ENCODE measurements at regions of chr1 and their contacts with region 1.

Region 1: DNA sequence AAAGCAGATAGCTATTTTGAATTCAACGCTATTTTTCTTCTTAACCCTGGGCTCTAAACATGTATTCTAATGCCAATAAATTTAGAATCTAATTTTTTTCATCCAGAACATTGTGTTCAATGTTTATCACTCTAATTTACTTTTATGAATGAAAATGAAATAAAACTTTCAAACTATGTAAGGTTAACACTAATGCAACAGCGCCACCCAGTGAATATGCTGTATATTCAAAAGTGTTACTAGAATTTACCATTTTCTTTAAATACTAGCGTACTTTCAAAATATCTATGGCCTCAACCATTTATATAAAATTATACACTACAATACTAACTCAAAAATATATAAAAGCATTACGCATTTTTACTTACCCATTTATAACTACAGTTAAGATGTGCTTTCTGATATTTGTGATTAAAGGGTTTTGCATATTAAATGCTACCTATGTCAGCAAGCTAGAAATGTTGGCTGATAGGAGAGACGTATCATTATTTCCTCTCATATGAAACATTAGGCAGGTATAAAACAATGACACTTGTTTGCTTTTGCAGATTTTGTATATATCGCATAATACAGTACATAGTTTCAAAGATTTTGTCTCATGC is 5.9 kb upstream of the NUF2 start:
- DNase-seq: no peak
- ATAC-seq: peak; percentile 48; the same call in 2 of the 3 replicates
- H3K4me3 ChIP-seq: no peak overlapping the region
- H3K27ac ChIP-seq: no peak overlapping the region
- H3K4me1 ChIP-seq: no peaks in the 10 kb centered on the region
- H3K27me3 ChIP-seq: no peaks in the 10 kb centered on the region
- CTCF ChIP-seq: peak in 2 of 3 experiments; percentile 45 to 55; a peak in 5 of 6 replicates
- EP300 ChIP-seq: no peak
- POLR2A ChIP-seq: no peak
- RAD21 ChIP-seq: peak; percentile 68

Region 2: DNA sequence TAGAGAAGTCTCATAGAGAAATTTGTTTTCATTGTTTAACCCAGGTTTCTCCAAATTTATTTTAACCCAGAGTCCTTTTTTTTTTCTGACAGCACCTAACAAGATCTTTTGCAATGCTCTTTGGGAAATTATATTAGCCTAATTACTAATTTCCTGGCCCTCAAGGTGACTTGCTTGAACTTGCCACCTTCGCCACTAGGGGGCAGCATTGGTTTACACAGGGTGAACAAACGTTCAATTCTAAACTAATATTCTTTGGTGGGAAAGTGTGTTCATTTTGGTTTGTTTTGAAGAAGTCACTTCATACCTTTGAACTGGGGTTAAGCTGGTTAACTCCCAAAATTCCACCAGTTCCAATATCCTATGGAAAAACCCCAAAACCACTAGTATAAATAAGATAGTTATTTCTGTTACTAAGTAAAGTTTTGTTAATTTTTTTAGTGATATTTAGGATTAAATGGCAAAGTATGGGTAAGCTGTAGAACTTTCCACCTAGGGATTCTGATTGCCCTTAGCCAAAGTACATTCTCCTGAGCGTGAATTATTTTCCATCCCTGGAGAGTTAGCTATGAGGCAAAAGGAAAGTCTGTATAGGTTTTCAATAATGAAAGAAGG is 467.9 kb before region 1 on chr1:
- CTCF ChIA-PET with region 1: interaction called, 76 read pairs
- POLR2A ChIA-PET with region 1: no interaction called
- RAD21 ChIA-PET with region 1: interaction called, 31 read pairs
- SMC1A ChIA-PET with region 1: interaction called, 33 read pairs
- in situ Hi-C with region 1: no loop called
- intact Hi-C with region 1: no loop called
- DNase-seq: no peak
- ATAC-seq: peak; percentile 79
- H3K4me3 ChIP-seq: no peak overlapping the region
- H3K27ac ChIP-seq: no peak overlapping the region
- H3K4me1 ChIP-seq: no peaks in the 10 kb centered on the region
- H3K27me3 ChIP-seq: no peaks in the 10 kb centered on the region; a peak in 1 of 4 replicates
- CTCF ChIP-seq: peak; percentile 81 to 83 (median 82)
- EP300 ChIP-seq: no peak
- POLR2A ChIP-seq: no peak
- RAD21 ChIP-seq: peak; percentile 83

Region 3: DNA sequence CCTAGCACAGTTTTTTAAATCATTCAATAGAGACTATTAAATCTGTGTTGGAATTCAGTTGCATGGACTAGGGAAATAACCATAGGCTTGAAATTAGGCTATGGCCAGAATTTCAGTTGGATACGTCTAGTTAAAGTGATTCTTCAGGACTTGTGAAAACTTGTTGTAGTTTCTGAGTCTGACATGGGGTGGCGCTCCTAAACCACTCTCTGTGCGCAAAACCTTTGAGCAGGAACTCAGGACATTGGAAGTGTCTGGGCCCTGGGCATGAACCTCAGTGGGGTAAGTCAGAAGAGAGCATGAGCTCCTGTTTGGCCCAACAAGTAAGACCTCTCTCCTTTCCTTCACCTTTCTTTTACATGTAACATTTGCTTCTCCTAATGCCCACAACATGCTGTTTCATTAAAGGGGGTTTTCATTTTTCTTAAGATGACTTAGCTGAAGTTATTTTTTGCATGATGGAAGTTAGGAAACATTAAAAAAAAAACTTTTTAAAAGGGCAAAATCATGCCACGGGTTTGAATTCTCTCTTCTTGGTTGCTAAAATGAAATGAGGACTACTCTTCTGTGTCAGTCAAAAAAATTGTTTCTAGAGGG is 437.8 kb before region 1 on chr1:
- CTCF ChIA-PET with region 1: interaction called, 17 read pairs
- POLR2A ChIA-PET with region 1: no interaction called
- RAD21 ChIA-PET with region 1: interaction called, 9 read pairs
- SMC1A ChIA-PET with region 1: interaction called, 5 read pairs
- in situ Hi-C with region 1: no loop called
- intact Hi-C with region 1: loop called (anchors 1 kb)
- DNase-seq: no peak
- ATAC-seq: peak; percentile 60
- H3K4me3 ChIP-seq: no peak overlapping the region
- H3K27ac ChIP-seq: no peak overlapping the region
- H3K4me1 ChIP-seq: no peaks in the 10 kb centered on the region
- H3K27me3 ChIP-seq: peaks cover 0 to 2% of the 10 kb centered on the region in 2 experiments; a peak in 2 of 4 replicates
- CTCF ChIP-seq: peak; percentile 54 to 59 (median 58); a peak in 5 of 6 replicates
- EP300 ChIP-seq: no peak
- POLR2A ChIP-seq: no peak
- RAD21 ChIP-seq: peak; percentile 70

Region 4: DNA sequence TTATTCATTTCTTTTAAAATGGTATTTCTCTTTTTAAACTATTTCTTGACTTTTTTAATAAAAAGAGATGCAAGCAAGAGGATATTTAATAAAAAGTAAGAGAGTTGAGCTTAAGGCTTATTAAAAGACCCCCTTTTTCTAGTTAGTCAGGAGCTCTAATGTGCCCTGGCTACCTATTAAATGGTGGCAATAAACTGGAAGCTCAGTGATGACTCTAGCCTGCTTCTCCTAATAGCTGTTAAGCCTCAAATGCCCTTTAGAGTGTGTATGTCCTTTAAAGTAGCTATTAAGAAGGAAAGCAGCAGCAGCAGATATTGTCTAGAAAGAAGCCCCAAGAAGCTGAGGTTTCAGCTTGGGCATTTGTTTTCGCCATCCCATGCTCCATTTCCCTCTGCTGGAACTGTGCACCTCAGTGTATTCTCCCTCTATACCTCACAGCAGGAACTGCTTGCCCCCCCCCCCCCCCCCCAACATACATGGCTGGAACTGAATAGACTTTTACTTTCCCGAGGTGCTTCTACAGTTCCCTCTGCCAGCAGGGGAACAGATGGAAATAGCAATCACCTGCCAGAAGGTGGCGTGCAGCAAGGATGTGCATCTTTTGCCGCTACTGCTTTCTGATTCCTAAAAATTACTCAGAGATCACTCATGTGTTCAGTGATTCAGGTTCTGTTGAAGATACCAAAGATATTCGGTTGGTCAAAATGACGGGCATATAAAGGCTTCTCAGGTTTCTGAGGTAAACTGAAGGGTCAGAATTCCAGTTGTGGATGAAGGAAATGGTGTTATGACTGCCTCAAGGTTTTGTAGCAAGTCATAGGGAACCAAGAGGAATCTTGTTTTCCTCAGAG is 244.2 kb before region 1 on chr1:
- CTCF ChIA-PET with region 1: interaction called, 136 read pairs
- POLR2A ChIA-PET with region 1: no interaction called
- RAD21 ChIA-PET with region 1: interaction called, 20 read pairs
- SMC1A ChIA-PET with region 1: interaction called, 69 read pairs
- in situ Hi-C with region 1: loop called (anchors 5 kb)
- intact Hi-C with region 1: loop called (anchors 2 kb)
- DNase-seq: no peak
- ATAC-seq: peak; percentile 85
- H3K4me3 ChIP-seq: no peak overlapping the region
- H3K27ac ChIP-seq: no peak overlapping the region
- H3K4me1 ChIP-seq: no peaks in the 10 kb centered on the region
- H3K27me3 ChIP-seq: peaks cover 0 to 8% of the 10 kb centered on the region in 2 experiments; a peak in 1 of 4 replicates
- CTCF ChIP-seq: peak; percentile 66 to 77 (median 74)
- EP300 ChIP-seq: no peak
- POLR2A ChIP-seq: no peak
- RAD21 ChIP-seq: peak; percentile 42

Region 5: DNA sequence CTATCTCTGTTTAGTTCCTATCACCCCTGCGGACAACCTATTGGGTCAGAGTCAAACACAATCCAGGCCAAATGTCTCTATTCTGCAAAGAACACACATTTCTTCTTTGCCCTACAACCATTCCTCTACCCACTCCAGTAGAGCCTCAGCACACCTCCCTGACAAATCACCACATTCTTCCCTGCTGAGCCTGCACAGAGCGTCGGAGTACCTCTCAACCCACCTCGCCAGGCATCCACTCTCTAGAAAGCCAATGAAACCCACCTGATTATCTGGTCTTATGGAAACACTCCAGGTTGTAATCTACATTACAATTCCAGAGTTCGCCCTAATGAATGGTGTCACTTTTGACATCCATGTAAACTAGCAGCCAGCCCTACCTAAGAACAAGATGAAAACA is 160.3 kb before region 1 on chr1:
- CTCF ChIA-PET with region 1: no interaction called
- POLR2A ChIA-PET with region 1: no interaction called
- RAD21 ChIA-PET with region 1: no interaction called
- SMC1A ChIA-PET with region 1: no interaction called
- in situ Hi-C with region 1: no loop called
- intact Hi-C with region 1: no loop called
- DNase-seq: no peak
- ATAC-seq: no peak
- H3K4me3 ChIP-seq: no peak overlapping the region
- H3K27ac ChIP-seq: no peak overlapping the region
- H3K4me1 ChIP-seq: no peaks in the 10 kb centered on the region
- H3K27me3 ChIP-seq: no peaks in the 10 kb centered on the region
- CTCF ChIP-seq: no peak
- EP300 ChIP-seq: no peak
- POLR2A ChIP-seq: no peak
- RAD21 ChIP-seq: no peak

Region 6: DNA sequence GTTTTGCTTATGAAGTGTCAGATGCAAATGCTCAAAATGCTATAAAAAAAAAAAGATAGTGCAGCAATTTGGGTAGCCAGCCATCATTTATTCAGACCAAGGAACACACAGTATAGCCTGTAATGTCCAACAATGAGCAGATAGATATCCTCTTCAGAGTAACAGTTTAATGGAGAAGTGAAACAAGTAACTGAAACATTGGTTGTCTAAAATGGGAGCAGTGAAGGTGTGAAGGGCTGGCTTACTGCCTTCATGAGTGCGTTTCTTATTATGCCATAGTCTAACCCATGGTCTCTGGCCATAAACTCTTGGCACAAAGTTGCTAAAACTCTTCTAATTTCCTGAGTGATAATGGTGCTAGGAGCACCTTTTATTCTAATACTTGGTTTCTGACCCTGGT is 124.6 kb before region 1 on chr1:
- CTCF ChIA-PET with region 1: interaction called, 3 read pairs
- POLR2A ChIA-PET with region 1: no interaction called
- RAD21 ChIA-PET with region 1: no interaction called
- SMC1A ChIA-PET with region 1: no interaction called
- in situ Hi-C with region 1: no loop called
- intact Hi-C with region 1: loop called (anchors 5 kb)
- DNase-seq: peak; percentile 9
- ATAC-seq: peak; percentile 77
- H3K4me3 ChIP-seq: no peak overlapping the region
- H3K27ac ChIP-seq: no peak overlapping the region
- H3K4me1 ChIP-seq: no peaks in the 10 kb centered on the region
- H3K27me3 ChIP-seq: no peaks in the 10 kb centered on the region
- CTCF ChIP-seq: no peak
- EP300 ChIP-seq: no peak
- POLR2A ChIP-seq: no peak
- RAD21 ChIP-seq: no peak

Region 7: DNA sequence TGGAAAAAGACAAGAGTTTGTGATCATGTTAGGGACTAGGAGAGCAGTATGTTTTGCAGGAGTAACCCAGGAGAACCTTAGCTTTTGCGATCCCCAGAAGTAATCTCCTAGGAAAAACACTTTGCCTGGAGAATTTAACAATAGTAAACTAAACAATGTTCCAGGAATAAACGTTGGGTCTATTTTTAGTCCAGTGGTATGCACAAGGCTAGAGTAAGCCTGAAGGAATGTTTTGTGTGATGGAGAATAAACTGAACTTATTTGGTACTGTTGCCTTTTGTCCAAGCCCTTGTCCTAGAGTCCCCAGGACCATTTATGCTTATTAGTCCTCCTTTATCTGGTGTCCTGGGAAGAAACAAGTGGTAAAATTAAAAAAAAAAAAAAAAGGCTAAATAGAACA is 84.5 kb before region 1 on chr1:
- CTCF ChIA-PET with region 1: no interaction called
- POLR2A ChIA-PET with region 1: no interaction called
- RAD21 ChIA-PET with region 1: no interaction called
- SMC1A ChIA-PET with region 1: no interaction called
- in situ Hi-C with region 1: no loop called
- intact Hi-C with region 1: no loop called
- DNase-seq: no peak
- ATAC-seq: no peak
- H3K4me3 ChIP-seq: no peak overlapping the region
- H3K27ac ChIP-seq: no peak overlapping the region
- H3K4me1 ChIP-seq: no peaks in the 10 kb centered on the region
- H3K27me3 ChIP-seq: no peaks in the 10 kb centered on the region
- CTCF ChIP-seq: no peak
- EP300 ChIP-seq: no peak
- POLR2A ChIP-seq: no peak
- RAD21 ChIP-seq: no peak

Region 8: GRCh38 chr1:163258181-163258580 is 57.7 kb before region 1 on chr1:
- CTCF ChIA-PET with region 1: no interaction called
- POLR2A ChIA-PET with region 1: no interaction called
- RAD21 ChIA-PET with region 1: no interaction called
- SMC1A ChIA-PET with region 1: no interaction called
- in situ Hi-C with region 1: no loop called
- intact Hi-C with region 1: no loop called
- DNase-seq: no peak
- ATAC-seq: no peak
- H3K4me3 ChIP-seq: no peak overlapping the region
- H3K27ac ChIP-seq: no peak overlapping the region
- H3K4me1 ChIP-seq: no peaks in the 10 kb centered on the region
- H3K27me3 ChIP-seq: no peaks in the 10 kb centered on the region
- CTCF ChIP-seq: no peak
- EP300 ChIP-seq: no peak
- POLR2A ChIP-seq: no peak
- RAD21 ChIP-seq: no peak

Region 9: DNA sequence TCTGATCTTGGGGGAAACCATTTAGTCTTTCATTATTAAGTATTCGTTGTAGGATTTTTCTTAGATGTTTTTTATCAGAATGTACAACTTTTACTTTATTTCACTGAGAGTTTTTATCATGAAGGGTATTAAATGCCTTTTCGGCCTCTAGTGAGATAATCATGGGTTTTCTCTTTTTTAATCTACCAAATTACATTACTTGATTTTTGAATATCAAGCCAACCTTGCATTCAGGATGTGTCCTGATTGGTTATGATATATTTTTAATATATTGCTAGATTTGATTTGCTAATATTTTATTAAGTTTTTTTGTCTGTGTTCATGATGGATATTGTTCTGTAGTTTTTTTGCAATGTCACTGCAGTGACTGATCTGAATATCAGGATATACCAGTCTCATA is 15.2 kb after region 1 on chr1:
- CTCF ChIA-PET with region 1: interaction called, 14 read pairs
- POLR2A ChIA-PET with region 1: no interaction called
- RAD21 ChIA-PET with region 1: no interaction called
- SMC1A ChIA-PET with region 1: interaction called, 6 read pairs
- in situ Hi-C with region 1: no loop called
- intact Hi-C with region 1: no loop called
- DNase-seq: no peak
- ATAC-seq: no peak
- H3K4me3 ChIP-seq: no peak overlapping the region
- H3K27ac ChIP-seq: no peak overlapping the region
- H3K4me1 ChIP-seq: no peaks in the 10 kb centered on the region
- H3K27me3 ChIP-seq: no peaks in the 10 kb centered on the region
- CTCF ChIP-seq: no peak
- EP300 ChIP-seq: no peak
- POLR2A ChIP-seq: no peak
- RAD21 ChIP-seq: no peak

Region 10: DNA sequence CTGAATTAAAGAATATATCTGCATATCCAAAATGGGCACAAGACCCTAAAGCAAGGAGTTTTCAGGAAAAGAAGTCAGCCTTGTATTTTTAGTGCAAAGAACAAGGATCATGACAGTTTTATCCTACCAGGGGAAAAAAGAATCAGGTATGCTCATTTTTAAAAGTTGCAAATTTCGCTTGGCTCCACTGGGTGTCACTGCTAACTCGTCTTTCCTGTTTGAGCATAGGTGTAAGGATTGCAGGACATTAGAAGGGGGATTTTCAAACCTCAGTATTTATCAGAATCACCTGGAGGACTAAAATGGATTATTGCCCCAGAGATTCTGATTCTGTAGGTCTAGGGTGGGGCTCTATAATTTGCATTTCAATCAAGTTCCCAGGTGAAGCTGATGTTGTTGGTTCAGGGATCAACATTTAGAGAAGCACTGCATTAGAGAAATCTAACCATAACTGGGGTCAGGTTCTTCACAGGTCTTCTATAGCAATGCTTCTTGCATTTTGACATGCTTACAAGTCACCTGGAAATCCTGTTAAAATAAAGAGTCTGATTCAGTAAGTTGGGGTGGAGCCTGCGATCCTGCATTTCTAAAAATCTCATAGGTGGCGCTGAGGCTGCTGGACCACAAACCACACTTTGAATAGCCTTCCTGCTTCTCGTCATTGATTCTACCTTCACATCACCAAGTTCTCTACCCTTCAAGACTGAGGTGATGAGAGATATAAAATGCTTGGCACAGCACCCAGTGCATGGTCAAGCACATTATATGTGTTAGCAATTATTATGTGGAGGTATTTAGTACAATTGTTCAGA is 45.5 kb after region 1 on chr1:
- CTCF ChIA-PET with region 1: no interaction called
- POLR2A ChIA-PET with region 1: no interaction called
- RAD21 ChIA-PET with region 1: no interaction called
- SMC1A ChIA-PET with region 1: no interaction called
- in situ Hi-C with region 1: no loop called
- intact Hi-C with region 1: no loop called
- DNase-seq: no peak
- ATAC-seq: peak; percentile 78
- H3K4me3 ChIP-seq: no peak overlapping the region
- H3K27ac ChIP-seq: no peak overlapping the region
- H3K4me1 ChIP-seq: no peaks in the 10 kb centered on the region
- H3K27me3 ChIP-seq: no peaks in the 10 kb centered on the region
- CTCF ChIP-seq: peak; percentile 39 to 59 (median 53); a peak in 5 of 6 replicates
- EP300 ChIP-seq: no peak
- POLR2A ChIP-seq: no peak
- RAD21 ChIP-seq: peak; percentile 63

Measured in GM12878 (cell line).